ENCODE measurements at regions of chr1 and their contacts with region 1.

Region 1: DNA sequence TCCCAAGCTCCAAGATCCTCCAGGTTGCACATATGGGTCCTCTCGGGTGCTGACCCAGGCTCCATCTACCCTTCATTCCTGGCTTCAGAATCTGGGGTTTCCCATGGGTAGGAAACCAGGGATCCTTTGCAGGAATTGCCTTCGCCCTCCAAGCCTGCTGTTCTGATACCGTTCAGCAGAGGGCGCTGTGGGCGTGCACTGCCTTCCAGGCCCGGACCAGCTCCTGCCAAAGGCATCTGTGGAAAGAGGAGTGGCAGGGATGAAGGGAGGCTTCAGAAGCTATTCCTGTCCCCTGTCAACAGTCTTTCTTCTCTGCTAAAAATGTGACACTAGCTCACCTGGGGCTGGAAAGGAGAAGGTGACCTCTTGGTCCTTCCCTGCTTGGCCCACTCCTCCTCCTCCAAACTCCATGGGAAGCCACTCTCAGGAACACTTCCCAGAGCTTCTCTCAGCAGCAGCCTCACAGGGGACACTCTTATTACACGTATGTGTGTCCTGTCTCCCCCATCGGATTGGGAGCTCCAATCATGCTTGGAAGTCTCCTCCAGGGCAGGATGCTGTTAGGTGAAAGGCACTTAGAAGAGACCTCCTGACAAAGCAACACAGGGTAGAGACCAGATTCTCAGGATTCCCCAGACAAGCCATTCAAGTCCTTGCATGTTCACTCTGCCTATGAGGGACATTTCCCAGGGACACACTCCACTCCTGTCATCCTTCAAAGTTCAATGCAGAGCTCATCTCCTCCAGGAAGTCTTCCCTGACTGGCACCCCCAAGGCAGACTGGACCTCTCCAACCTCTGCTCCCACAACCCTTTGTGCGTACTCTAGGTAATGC is 71.3 kb downstream of the VWA5B1 start:
- DNase-seq: peak in 41 of 42 donors; percentile 65 to 94 (median 82)

Region 2: DNA sequence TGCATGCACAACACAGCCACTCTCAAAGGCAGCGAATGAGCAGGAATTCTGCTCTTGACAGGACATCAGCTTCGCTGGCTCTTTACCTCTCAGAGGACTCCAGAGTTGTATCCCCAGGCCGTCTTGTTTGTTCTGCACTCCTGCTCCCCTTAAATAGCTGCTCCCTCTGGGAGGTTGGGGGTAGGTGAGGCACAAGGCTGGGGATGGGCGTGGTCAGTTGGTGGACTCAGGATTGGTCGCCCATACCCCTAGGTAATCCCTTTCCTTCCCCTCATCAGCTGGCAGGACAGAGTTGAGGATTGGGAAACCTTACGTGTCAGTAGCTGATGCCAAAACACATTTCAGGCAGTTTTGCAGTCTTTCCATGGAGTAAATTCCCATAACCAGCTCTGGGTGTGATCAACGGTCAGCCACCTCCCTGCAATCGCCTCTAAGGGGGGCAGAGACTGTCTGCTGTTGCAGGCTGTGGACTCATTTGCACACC is 382.5 kb before region 1 on chr1 and contains the start of gene PLA2G2A:
- intact Hi-C with region 1: no loop called
- DNase-seq: no peak

Region 3: DNA sequence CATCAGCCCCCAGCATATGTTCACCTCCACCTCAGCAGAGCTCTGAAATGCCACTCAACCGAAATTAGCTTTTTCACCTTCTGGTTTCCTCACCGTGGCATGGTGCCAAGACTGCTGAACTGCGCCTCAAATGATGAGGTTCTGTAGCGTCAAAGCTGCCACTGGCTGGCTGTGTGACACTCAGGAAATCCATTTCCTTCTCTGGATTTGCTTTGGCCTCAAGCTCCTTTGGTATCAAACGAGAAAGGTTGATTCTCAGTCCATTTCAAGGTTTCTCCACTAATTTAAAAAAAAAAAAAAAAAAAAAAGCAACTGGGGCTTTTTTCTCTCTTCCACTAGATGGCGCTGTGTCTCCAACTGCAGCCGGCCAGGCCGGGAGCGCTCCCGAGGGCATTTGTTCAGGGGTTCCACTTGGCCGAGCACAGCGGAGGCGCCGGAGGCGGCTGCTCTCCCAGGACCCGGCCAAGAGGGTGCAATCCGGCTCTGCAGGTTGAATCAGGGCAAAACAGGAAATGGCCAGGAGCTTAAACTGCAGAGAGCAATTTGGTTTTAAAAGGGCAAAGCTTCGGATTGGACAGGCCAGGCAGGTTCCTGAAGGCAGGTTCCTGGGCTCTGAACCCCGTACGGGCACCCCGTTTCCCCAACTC is 149.2 kb before region 1 on chr1:
- intact Hi-C with region 1: loop called (anchors 10 kb)
- DNase-seq: peak; percentile 37 to 86 (median 66)

Region 4: GRCh38 chr1:20229171-20229570 is 132.9 kb before region 1 on chr1:
- intact Hi-C with region 1: no loop called
- DNase-seq: no peak

Region 5: GRCh38 chr1:20279509-20279908 is 82.5 kb before region 1 on chr1:
- intact Hi-C with region 1: no loop called
- DNase-seq: no peak

Region 6: GRCh38 chr1:20405893-20406604 is 44.0 kb after region 1 on chr1:
- intact Hi-C with region 1: no loop called
- DNase-seq: peak in 1 of 42 donors; percentile 28